Dendritic cell treated with granulocyte-macrophage colony-stimulating factor and Interleukin-4, amounts not matched to agents 40 ng/mL and 50 ng/mL, for 4 days (primary cell): ENCODE measurements at regions of chr12 and their contacts with region 1.

Region 1: DNA sequence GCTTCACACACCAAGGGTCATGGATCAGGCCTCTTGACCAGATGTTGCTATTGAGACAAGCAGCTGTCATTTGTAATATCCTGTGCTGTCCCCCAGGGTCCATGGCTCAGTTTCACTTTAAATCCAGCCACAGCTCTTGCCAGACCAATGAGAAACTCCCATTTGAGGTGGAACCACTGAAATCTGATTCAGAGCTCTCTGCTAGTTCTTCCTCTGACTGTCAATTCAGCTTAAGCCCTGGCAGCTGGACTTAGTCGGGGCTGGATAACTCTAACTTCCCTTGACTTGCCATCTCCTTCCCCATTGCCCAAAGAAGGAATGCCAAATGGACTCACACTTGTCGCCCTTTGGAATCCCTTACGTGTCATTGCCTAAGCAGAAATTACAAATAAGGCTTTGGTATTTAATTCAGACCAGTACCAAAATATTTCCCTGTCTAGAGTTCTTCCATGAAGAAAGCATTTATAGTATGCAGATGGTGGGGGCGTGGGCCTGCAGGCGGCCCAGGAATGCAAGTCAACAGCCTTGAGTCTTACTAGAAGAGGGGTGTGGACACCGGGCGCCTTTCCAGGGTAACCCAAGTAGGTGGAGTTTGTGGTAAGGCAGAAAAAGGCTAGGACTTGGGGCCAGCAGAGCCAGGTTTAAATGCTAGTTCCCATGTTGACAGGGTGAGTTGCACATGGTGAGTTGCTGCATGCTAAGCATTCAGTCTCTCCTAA is 96.9 kb upstream of the TMPO start:
- H3K4me3 Mint-ChIP-seq: no peak overlapping the region
- H3K27ac Mint-ChIP-seq: peak overlapping the region; percentile 23
- H3K4me1 Mint-ChIP-seq: peaks cover 34% of the 10 kb centered on the region
- H3K27me3 Mint-ChIP-seq: no peaks in the 10 kb centered on the region

Region 2: DNA sequence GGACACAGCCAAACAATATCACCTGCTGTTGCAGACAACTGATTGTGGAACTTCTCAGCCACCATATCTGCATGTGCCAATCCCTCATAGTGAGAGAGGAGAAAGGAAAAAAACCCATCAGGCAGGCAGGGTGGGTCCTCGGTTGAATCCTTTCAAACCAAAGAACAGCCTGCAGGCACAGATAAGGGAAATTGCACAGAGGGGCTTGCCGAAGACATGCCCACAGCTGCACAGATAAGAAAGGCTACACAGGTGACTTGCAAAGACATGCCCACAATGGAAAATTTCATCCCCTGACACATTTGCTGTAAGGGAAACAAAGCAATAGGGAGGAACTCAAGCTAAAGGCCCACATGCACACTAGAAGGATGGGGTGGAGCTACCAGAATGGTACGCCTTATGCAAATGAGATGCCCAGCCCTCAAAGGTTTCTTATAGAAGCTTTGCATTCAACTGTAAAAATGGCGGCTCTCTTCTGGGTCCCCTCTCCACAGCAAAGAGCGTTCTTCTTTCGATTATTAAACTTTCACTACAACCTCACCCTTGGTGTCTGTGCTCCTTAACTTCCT is 73.1 kb before region 1 on chr12:
- intact Hi-C with region 1: no loop called
- H3K4me3 Mint-ChIP-seq: no peak overlapping the region
- H3K27ac Mint-ChIP-seq: no peak overlapping the region
- H3K4me1 Mint-ChIP-seq: no peaks in the 10 kb centered on the region
- H3K27me3 Mint-ChIP-seq: no peaks in the 10 kb centered on the region

Region 3: GRCh38 chr12:98439981-98440581 is 21.6 kb after region 1 on chr12:
- intact Hi-C with region 1: no loop called
- H3K4me3 Mint-ChIP-seq: peak overlapping the region; percentile 55
- H3K27ac Mint-ChIP-seq: peak overlapping the region; percentile 92
- H3K4me1 Mint-ChIP-seq: peaks cover 50% of the 10 kb centered on the region
- H3K27me3 Mint-ChIP-seq: peaks cover 1% of the 10 kb centered on the region

Region 4: DNA sequence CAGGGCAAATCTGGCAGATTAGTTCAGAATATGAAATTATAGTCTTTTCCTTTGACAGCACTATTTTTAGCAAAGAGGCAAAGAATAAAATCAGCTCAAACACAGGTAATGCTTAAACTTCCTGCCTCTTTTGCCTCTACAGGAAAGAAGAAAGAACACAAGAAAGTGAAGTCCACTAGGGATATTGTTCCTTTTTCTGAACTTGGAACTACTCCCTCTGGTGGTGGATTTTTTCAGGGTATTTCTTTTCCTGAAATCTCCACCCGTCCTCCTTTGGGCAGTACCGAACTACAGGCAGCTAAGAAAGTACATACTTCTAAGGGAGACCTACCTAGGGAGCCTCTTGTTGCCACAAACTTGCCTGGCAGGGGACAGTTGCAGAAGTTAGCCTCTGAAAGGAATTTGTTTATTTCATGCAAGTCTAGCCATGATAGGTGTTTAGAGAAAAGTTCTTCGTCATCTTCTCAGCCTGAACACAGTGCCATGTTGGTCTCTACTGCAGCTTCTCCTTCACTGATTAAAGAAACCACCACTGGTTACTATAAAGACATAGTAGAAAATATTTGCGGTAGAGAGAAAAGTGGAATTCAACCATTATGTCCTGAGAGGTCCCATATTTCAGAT is 114.3 kb after region 1 on chr12:
- intact Hi-C with region 1: loop called (anchors 5 kb)
- H3K4me3 Mint-ChIP-seq: no peak overlapping the region
- H3K27ac Mint-ChIP-seq: no peak overlapping the region
- H3K4me1 Mint-ChIP-seq: no peaks in the 10 kb centered on the region
- H3K27me3 Mint-ChIP-seq: no peaks in the 10 kb centered on the region